ENCODE measurements at regions of chr13 and their contacts with region 1.

Region 1: DNA sequence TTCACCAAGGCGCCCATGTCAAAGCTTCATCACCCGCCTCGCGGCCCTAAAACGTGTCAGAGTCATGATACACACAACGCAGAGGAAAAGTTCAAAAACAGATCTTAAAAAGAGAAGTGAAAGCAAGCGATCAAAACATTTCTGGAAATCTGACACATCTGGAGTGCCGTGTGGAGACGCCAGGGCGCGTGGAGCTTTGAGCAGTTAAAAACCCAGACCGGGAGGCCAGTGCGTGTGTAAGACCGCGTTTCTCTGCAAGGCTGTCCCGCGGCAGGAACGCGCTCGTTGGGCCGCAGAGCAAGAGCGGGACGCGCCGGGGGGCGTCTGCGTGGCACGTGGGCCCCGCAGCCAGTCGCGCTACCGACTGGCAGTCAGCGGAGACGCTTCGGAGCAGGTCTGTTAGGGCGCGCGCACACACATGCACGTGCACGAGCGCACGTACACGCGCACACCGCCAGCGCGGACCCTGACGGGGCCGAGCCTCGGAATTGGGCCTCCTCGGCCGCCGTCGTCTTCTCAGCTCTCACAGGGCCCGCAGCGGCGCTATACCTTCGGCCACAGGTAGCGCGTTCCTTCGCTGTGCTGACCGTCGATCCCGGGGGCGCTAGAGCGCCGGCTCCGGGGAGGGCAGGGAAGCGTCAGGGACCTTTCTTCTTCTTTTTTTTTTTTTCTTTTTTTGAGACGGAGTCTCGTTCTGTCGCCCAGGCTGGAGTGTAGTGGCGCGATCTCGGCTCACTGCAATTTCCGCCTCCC is 35.8 kb downstream of the RNF6 start:
- DNase-seq: peak; percentile 85 to 92 (median 91)
- H3K4me3 ChIP-seq: peak overlapping the region; percentile 62
- H3K27ac ChIP-seq: peak overlapping the region; percentile 55 to 81
- H3K4me1 ChIP-seq: peaks cover 9% of the 10 kb centered on the region
- H3K27me3 ChIP-seq: no peaks in the 10 kb centered on the region
- CTCF ChIP-seq: peak; percentile 41 to 62 (median 57)
- EP300 ChIP-seq: no peak
- POLR2A ChIP-seq: no peak

Region 2: DNA sequence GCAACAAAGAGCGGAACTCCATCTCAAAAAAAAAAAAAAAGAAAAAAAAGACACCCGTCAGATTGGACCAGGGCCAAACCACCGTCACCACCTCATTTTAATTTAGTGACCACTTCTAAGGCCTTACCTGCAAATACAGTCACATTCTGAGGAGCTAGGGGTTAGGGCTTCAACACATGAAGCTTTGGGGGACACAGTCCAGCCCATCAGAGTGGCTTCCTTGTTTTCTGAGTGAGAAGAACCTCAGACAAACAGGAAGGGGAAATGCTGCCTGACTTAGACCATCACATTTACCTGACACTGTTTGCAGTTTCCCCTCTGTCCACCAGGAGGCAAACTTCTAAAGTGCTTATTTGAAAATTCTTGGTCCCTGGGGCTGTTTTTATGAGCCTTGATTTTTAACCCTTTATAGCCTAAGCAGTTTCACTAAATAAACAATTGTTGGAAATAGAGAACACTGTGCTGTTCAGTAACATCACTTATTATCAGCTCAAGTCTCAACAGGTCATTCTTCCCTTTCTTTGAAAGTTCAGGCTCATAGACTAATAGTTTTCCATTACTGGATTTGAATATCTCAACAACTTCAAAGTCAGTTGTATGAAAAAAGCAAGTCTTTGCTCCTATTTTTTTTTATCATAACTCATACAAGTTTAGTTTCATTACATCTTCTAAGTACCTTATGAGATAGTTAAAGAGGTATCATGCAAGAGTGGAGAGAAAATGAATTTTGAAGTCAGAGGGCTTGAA is 296.3 kb after region 1 on chr13:
- intact Hi-C with region 1: loop called in 1 of 4 experiments (anchors 10 kb)
- DNase-seq: peak in 4 of 5 donors; percentile 39 to 73 (median 53)
- H3K4me3 ChIP-seq: no peak overlapping the region
- H3K27ac ChIP-seq: no peak overlapping the region
- H3K4me1 ChIP-seq: no peaks in the 10 kb centered on the region
- H3K27me3 ChIP-seq: no peaks in the 10 kb centered on the region
- CTCF ChIP-seq: peak; percentile 56 to 78 (median 71)
- EP300 ChIP-seq: no peak
- POLR2A ChIP-seq: no peak

Region 3: GRCh38 chr13:26498656-26499591 is 312.6 kb after region 1 on chr13:
- intact Hi-C with region 1: loop called in 1 of 4 experiments (anchors 5 kb)
- DNase-seq: no peak
- H3K4me3 ChIP-seq: no peak overlapping the region
- H3K27ac ChIP-seq: no peak overlapping the region
- H3K4me1 ChIP-seq: no peaks in the 10 kb centered on the region
- H3K27me3 ChIP-seq: no peaks in the 10 kb centered on the region
- CTCF ChIP-seq: no peak
- EP300 ChIP-seq: no peak
- POLR2A ChIP-seq: no peak

Region 4: DNA sequence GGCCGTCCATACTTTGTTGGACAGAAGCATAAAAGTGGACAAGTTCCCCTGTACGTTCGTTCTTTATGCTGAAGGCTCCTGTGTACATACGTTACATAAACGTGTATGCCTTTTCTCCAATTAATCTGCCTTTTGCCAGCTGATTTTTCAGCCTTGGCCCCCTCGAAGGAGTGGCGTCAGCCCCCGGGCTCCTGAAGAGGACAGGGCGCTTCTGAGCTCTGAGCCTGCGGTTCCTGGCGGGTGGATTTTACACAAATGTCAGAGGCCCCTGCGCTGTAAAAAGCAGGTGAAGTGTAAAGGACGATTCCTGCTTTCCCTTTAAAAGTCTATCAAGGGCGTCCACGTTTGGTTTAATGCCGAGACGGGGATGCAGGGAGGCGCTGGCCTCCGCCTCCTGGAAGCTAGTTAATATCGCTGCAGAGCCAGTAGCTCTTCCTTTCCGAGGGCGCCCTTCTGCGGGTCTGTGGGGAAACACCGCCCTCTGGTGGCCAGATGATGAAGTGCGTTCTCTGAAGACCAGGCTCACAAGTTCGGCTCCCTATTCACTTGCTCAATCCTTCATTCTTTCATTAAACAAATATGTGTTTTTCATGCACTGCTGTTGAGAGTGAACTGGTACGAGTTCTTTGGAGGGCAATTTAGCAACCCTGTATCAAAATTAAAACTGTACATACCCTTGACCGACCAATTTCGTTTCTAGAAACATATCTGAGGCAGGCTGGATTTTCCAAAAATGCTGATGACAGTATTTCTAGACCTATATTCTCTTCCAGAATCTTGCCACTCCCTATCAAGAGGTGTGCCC is 512.3 kb after region 1 on chr13:
- intact Hi-C with region 1: loop called (anchors 5 to 10 kb)
- DNase-seq: peak; percentile 72 to 91 (median 87)
- H3K4me3 ChIP-seq: no peak overlapping the region
- H3K27ac ChIP-seq: no peak overlapping the region
- H3K4me1 ChIP-seq: no peaks in the 10 kb centered on the region
- H3K27me3 ChIP-seq: no peaks in the 10 kb centered on the region
- CTCF ChIP-seq: peak; percentile 88 to 93 (median 90)
- EP300 ChIP-seq: no peak
- POLR2A ChIP-seq: no peak

Region 5: DNA sequence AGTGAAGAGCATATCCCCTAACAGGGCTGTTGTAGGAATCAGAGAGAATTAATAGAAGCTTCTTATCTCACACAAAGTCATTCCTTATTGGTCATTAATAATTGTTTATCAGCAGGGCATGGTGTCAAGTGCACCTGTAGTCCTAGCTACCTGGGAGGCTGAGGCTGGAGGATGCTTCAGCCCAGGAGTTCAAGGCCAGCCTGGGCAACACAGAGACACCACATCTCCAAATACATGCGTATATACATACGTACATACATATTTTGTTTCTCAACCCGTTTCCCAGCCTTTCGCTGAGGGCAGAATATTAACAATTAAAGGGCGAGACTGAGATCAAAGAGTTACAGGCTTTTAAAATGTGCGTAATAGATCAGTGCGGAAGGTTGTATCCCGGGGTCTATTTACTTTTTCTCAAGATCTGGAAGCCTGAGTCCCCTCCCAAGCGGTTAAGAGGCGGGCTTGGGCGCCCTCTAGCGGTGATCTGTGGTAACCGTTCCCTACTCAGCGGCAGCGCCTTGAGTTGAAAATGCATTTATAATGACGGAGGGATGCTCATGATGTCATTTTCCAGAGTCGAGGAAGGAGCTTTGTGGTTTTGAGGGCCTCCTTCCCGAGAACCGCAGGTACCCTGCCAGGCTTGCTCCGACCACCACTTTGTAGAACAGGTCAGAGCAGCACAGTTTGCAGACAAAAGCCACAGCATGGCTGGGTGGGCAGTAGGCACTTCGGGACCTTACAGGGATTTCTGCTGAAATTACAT is 743.9 kb after region 1 on chr13:
- intact Hi-C with region 1: loop called in 1 of 4 experiments (anchors 10 kb)
- DNase-seq: peak; percentile 53 to 81 (median 74)
- H3K4me3 ChIP-seq: no peak overlapping the region
- H3K27ac ChIP-seq: no peak overlapping the region
- H3K4me1 ChIP-seq: no peaks in the 10 kb centered on the region
- H3K27me3 ChIP-seq: no peaks in the 10 kb centered on the region
- CTCF ChIP-seq: peak; percentile 36 to 66 (median 56)
- EP300 ChIP-seq: no peak
- POLR2A ChIP-seq: no peak

Measured in ovary (tissue), 10 donors.